ENCODE measurements at regions of chr14 and their contacts with region 1.

Region 1: DNA sequence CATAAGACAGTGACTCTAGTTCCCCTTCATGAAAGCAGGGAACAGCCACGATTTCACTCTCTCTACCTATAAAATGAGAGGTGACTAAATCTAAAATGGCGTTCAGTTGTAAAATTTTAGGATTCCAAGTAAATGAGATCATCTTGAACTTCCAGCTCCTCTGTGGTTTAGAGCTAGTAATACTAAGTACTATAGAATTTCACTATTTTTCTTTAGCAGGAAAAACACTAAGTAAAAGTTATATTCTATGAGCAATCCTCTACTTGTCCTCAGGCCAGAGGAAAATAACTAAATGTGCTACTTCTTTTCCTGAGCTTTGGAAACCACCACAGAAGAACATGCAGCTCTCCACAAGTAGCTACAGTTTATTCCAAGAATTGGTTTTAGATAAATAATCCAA is 55.6 kb downstream of the NIN start:
- DNase-seq: no peak
- ATAC-seq: no peak

Region 2: DNA sequence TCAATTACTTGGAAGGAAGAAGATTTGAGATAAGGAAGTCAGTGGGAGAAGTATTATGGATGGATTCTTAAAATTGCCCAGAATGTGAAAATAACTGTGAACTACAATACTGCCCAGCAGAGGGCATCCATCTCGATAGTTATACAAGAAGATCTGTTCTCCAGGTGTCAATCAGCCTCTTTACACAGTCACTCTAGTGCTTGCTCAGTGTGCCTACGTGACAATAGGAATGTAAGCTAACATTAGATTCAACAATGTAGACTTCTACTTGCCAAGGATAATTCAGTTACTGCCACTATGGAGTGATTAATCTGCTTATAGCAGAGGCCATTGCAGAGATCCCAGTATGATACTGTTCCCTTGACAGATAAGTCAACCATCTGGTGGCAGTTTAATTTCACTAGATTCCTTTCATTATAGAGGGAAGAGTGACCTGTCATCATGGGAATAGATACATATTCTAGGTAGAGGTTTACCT is 232.4 kb before region 1 on chr14:
- intact Hi-C with region 1: loop called in 1 of 2 experiments (anchors 5 kb)
- DNase-seq: peak in 1 of 2 donors; percentile 48
- ATAC-seq: peak; percentile 76

Measured in left colon (tissue), 2 donors.